Right ventricle myocardium inferior (tissue), 1 donor: ENCODE measurements at regions of chr4 and their contacts with region 1.

Region 1: DNA sequence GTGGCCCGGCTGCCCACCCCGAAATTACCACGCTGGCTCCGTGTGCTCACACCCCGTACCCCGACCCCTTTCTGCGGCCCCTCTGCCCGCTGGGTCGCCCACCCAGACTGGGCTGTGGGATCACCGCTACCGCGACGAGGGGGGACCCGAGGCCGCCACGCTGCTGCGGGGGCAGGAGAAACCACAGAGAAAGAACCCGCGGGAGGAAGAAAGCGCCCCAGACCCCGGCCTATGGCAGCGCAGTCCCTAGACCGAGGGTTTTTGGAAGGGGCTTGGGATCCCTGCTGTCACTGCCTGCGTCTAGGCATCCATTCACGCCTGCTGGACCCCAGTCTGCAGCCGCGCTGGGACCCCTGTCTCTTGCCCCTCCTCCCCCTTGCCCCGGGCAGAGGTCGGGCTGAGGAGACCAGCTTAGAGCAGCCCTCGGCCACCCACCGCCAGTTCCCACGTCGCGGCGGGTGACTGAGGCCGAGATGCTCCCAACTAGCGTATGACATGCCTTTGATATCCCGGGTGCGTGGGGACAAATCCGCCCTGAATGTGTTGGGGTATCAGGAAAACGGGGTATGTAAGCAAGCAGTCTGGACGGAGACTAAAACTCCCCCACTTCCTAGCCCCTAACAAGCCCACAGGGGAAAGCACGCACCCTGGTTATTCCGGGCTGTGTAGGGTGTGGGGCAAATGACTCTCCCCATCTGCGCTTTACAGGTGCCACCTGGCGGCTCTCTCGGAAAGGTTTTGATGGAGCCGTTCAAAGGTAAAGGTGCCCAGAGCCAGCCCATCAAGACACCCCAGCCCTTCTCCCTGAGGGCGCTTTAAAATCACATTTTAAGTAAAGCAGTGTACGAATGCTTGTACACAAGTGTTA is 862 bp upstream of the INPP4B start:
- DNase-seq: no peak
- ATAC-seq: peak; percentile 70

Region 2: DNA sequence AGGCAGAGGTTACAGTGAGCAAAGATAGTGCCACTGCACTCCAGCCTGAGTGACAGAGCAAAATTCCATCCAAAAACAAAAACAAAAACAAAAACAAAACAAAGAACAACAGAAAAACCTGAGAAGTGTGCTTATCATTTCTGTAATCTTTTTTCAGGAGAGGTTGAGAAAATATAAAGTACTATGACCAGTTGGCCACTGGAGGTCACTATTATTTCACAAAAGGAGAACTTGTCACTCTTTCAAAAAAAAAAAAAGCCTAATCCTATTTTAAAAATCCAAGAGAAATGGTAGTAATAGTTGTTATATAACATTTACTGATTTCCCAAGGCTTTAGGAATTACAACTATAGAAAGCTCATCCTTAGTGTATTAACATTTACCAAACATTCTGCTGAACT is 1688.7 kb before region 1 on chr4:
- intact Hi-C with region 1: loop called (anchors 10 kb)
- DNase-seq: no peak
- ATAC-seq: no peak

Region 3: DNA sequence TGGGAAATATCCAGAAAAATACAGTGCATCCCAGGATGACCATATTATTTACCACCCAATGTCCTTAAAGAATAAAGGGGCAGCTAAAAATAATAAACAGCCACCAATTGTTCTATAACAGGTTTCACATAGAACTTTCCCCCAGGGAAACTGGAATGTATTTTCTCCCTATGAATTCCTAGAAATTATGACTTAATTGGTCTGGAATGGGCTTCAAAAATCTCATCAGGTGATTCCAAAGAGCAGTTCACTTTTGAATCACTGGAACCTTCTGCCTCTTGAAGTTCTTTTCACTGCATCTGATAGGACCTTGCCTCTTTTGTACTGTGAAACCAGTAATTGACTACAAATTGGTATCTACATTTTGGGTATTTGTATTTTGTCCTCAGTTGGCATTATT is 1507.0 kb before region 1 on chr4:
- intact Hi-C with region 1: loop called (anchors 5 kb)
- DNase-seq: no peak
- ATAC-seq: no peak

Region 4: GRCh38 chr4:142126890-142127497 is 720.0 kb before region 1 on chr4:
- intact Hi-C with region 1: loop called (anchors 2 kb)
- DNase-seq: no peak
- ATAC-seq: peak; percentile 34

Region 5: DNA sequence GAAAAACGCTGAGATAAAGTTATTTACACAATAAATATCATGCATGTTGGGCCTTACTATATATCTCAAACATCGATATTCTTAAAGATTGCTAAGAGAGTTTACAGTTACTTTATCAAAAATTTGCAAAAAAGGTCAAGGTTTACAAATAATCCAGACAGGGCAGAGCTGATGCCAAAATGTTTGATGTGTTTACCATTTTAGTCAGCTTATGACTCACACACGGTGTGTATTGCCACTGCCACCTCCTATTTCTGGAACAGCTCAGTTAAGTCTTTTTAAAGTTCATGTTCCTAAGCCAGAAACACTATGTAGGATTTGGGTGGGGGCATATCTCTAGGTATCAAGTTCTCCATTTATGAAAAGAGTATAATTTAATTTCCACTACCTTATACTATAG is 581.4 kb before region 1 on chr4:
- intact Hi-C with region 1: loop called (anchors 10 kb)
- DNase-seq: no peak
- ATAC-seq: peak; percentile 73

Region 6: DNA sequence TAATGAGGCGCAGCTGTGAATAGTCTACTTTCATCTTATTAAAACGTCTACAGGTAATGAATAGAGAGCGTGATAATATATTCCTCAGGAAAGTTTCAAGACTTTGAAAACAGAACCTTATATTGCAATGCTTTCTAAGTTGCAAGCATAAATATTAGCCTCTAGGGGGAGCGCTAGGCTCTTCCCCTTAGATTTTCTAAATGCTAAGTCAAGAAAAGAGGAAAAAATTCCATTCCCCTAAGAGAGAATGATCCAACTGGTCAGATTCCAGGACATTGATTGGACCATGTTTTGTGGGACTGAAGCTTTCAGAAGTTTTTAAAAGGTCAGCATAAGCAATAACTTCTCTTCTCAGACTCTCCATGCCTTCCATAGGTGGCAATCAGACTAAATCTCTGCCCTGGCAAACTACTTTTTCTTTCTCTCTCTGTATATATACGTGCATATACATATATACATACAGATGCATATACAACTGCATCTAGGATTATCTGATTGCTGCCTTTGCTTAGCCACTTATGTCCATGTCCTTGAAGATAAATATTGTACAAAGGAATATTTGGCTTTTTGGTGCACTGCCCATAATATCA is 493.7 kb before region 1 on chr4:
- intact Hi-C with region 1: loop called (anchors 5 kb)
- DNase-seq: no peak
- ATAC-seq: no peak

Region 7: GRCh38 chr4:142615318-142615654 is 231.7 kb before region 1 on chr4:
- intact Hi-C with region 1: no loop called
- DNase-seq: no peak
- ATAC-seq: no peak